Astrocyte of the cerebellum (primary cell): ENCODE measurements at regions of chr9 and their contacts with region 1.

Region 1: GRCh38 chr9:22154064-22154463 is 145.0 kb upstream of the CDKN2B start:
- DNase-seq: no peak
- H3K4me3 ChIP-seq: no peak overlapping the region
- CTCF ChIP-seq: no peak

Region 2: GRCh38 chr9:22119537-22120158 is 34.4 kb before region 1 on chr9:
- in situ Hi-C with region 1: loop called (anchors 5 kb)
- DNase-seq: no peak
- H3K4me3 ChIP-seq: no peak overlapping the region
- CTCF ChIP-seq: peak; percentile 64

Region 3: DNA sequence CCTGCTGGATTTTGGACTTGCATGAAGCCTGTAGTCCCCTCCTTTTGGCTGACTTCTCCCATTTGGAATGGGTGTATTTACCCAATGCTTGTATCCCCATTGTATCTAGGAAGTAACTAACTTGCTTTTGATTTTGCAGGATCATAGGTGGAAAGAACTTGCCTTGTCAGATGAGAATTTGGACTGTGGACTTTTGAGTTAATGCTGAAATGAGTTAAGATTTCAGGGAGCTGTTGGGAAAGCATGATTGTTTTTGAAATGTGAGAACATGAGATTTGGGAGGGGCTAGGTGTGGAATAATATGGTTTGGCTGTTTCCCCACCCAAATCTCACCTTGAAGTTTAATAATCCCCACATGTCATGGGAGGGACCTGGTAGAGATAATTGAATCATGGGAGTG is 44.6 kb after region 1 on chr9:
- in situ Hi-C with region 1: no loop called
- DNase-seq: no peak
- H3K4me3 ChIP-seq: no peak overlapping the region
- CTCF ChIP-seq: no peak